Head of caudate nucleus (tissue), 42 donors: ENCODE measurements at regions of chr5 and their contacts with region 1.

Region 1: GRCh38 chr5:31638748-31639418 is at the start of gene PDZD2:
- DNase-seq: peak; percentile 76 to 96 (median 88)

Region 2: DNA sequence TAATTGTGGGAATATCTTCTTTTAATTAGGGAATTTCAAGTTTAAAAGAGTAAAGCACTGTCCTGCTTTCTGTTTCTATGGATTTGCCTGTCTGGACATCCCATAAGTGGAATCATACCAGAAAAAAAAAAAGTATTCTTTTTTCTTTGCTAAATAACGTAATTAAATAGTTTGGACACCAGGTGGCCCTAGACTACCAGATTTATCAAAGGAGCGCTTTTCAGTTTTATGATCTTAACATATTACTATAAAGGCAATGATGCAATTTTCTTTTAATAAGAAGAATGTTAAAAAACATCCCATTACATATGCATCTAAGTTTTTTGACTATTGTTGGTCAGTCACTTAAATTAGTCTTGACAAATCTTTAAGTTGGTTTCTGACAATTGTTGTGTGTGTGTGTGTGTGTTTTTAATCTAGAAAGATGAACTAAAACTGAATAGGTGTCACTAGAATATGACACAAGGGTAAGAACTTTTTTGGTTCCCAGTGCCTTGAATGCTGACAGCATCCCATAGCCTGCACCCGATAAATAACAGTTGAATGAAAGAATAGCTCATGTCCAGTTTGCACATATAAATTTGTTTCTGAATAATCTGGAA is 57.3 kb before region 1 on chr5:
- intact Hi-C with region 1: loop called (anchors 10 kb)
- DNase-seq: peak in 7 of 42 donors; percentile 7 to 48 (median 26)

Region 3: GRCh38 chr5:31733371-31733770 is 94.5 kb after region 1 on chr5:
- intact Hi-C with region 1: loop called (anchors 5 kb)
- DNase-seq: peak; percentile 29 to 94 (median 76)

Region 4: DNA sequence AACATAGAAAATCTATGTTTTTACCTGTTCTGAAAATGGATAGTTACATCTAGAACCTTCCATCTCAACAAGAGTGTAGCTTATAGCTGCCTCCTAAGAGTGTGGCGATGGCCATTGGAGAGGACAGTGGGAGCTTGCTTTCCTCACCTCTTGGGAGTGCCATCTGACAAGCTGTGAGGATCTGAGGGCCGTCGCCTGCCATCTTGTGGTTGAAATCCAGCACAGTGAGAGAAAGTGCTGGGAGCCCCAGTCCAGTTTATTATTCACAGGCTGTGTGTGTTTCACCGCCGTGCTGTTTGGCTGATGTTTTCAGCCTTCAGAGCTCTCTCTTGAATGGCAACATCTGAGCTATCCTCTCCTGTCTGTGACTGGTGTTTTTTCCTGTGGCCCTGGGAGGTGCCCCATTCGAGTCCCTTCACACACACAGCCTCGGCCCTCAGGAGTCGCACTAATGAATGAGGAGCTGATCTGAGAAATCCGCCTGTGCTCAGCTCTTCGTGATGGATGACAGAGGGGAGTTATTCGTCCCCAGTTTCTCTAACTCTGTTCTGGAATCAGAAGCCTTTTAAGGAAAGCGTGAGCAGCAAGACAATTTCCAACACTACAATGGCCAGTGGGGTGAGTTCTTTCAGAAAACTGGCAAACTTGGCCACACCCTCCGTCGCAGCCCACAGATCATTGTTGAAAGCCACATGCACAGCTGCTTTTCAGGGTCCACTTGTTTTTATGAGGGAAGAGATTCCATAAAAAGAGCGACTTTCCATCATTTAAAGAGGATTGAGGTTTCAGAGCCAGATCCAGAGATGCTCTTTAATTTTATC is 170.4 kb after region 1 on chr5:
- intact Hi-C with region 1: loop called (anchors 2 kb)
- DNase-seq: peak; percentile 72 to 95 (median 87)